Adrenal gland (tissue), 19 donors: ENCODE measurements at regions of chr11 and their contacts with region 1.

Region 1: DNA sequence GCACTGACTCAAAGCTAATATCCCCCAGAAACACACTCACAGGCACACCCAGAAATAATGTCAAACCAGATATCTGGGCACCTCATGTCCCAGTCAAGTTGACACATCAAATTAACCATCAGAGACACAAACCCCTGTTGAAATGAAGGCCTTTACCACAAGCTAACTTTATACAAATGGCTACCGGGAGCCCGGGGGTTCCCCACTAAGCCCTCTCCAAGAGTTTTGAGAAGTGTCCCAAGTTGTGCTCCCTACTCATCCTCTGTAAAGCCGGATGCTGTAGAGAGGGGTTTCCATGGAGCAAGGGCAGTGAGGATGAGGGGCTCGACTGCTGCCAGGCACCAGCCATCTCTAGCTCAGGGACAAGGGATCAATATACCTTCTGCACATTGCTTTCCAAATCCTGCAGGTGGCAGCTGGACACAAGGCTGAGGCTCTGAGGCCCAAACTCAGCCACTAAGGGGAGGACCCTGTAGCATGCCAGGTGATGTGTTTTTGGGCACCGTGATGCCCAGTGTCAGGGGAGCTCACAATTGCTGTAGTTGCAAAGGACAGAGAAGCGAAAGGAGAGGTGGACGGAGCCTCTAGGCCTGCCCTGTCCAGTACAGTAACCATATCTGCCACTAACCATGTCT is 145.7 kb downstream of the TTC17 start:
- DNase-seq: peak; percentile 26 to 65 (median 48)
- H3K4me3 ChIP-seq: no peak overlapping the region
- H3K27ac ChIP-seq: no peak overlapping the region
- H3K4me1 ChIP-seq: no peaks in the 10 kb centered on the region
- H3K27me3 ChIP-seq: no peaks in the 10 kb centered on the region
- CTCF ChIP-seq: peak; percentile 16 to 67 (median 54)
- POLR2A ChIP-seq: no peak

Region 2: GRCh38 chr11:43567396-43567975 is 63.1 kb after region 1 on chr11:
- intact Hi-C with region 1: loop called (anchors 2 to 5 kb)
- DNase-seq: no peak
- H3K4me3 ChIP-seq: no peak overlapping the region
- H3K27ac ChIP-seq: no peak overlapping the region
- H3K4me1 ChIP-seq: no peaks in the 10 kb centered on the region
- H3K27me3 ChIP-seq: no peaks in the 10 kb centered on the region
- CTCF ChIP-seq: peak; percentile 46 to 75 (median 64)
- POLR2A ChIP-seq: no peak

Region 3: DNA sequence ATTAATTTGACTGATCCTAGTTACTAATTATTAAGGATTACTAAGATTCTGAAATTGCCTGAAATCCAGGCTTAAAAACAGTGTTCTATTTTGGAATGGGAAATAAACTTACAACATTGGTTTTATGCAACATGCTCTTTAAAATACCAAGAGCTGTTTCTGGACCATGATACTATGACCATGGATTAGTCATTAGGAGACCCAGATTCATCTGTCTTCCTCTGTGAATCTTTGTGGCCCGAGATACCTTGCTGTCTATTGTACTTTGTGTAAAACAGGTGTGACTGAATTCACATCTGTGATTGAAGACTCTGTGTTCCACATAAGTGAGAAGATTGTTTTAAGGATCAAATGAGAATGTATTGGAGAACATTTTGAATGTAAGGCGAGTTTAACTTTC is 274.9 kb after region 1 on chr11:
- intact Hi-C with region 1: no loop called
- DNase-seq: no peak
- H3K4me3 ChIP-seq: no peak overlapping the region
- H3K27ac ChIP-seq: no peak overlapping the region
- H3K4me1 ChIP-seq: no peaks in the 10 kb centered on the region
- H3K27me3 ChIP-seq: no peaks in the 10 kb centered on the region
- CTCF ChIP-seq: no peak
- POLR2A ChIP-seq: no peak